PC-3 (cell line): ENCODE measurements at regions of chr17 and their contacts with region 1.

Region 1: DNA sequence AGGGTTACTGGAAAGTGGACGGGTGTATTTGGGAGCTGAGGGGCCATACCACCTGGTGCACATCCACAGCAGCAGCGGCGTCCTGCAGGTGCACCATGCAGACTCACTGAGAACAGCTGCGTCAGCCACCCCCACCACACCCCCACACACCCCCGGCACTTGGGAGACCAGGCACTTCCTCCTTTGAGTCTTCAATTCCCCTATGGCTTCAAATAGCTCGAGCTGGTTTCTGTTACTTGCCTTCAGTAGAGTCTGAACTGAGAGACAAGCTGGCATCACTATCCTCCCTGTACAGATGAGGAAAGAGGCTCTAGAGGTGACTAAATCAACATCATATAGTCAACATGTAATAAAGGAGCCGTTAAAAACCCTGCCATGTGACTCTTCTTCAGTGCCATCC is 15.4 kb downstream of the CUEDC1 start:
- DNase-seq: no peak
- ATAC-seq: no peak
- H3K4me3 ChIP-seq: no peak overlapping the region
- H3K27ac ChIP-seq: peak overlapping the region; percentile 52
- H3K4me1 ChIP-seq: peaks cover 69% of the 10 kb centered on the region
- H3K27me3 ChIP-seq: no peaks in the 10 kb centered on the region
- CTCF ChIP-seq: no peak

Region 2: DNA sequence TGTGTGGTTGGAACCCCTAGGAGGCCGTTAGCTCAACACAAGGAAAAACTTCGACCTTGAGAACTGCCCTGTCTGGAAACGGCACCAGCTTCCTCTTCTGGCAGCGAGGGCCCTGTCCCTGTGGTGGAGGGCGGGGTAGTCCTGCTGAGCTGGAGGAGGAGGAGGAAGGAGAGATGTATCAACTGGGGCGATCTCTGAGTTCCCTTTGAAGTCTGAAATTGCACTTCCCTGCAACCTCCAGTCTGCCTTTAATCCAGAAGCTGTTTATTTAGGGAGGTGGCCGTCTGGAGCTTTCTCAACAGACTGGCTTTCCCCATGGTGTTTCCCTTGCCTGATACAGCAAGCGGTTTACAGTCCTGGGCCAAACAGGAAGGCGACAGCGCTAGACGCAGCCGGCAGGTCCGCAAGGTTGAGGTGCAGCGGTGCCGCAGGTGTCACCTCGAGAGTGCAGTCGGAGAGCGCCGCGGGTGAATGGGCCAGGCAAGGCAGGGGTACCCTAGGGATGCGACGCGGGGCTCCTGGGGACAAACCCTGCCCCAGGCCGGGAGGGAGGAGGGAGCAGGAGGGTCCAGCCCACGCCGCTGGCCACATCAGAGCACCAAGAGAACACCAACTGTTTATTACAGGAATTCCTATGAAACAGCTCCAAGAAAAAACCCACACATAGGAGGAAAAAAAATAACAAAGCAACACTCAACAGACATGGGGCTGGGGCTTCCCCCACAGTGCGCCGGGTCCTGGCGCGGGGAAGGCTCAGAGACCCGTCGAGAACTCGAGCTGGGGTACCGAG is 78.6 kb before region 1 on chr17:
- CTCF ChIA-PET with region 1: no interaction called
- POLR2A ChIA-PET with region 1: interaction called, 25 read pairs
- intact Hi-C with region 1: no loop called
- DNase-seq: peak; percentile 50
- ATAC-seq: peak; percentile 30
- H3K4me3 ChIP-seq: peak overlapping the region; percentile 63
- H3K27ac ChIP-seq: peak overlapping the region; percentile 8
- H3K4me1 ChIP-seq: peaks cover 27% of the 10 kb centered on the region
- H3K27me3 ChIP-seq: no peaks in the 10 kb centered on the region
- CTCF ChIP-seq: no peak

Region 3: GRCh38 chr17:57902800-57903759 is 36.7 kb before region 1 on chr17:
- CTCF ChIA-PET with region 1: interaction called, 14 read pairs
- POLR2A ChIA-PET with region 1: interaction called, 8 read pairs
- intact Hi-C with region 1: loop called (anchors 1 kb)
- DNase-seq: peak; percentile 98
- ATAC-seq: peak; percentile 82
- H3K4me3 ChIP-seq: no peak overlapping the region
- H3K27ac ChIP-seq: peak overlapping the region; percentile 96
- H3K4me1 ChIP-seq: peaks cover 64% of the 10 kb centered on the region
- H3K27me3 ChIP-seq: no peaks in the 10 kb centered on the region
- CTCF ChIP-seq: no peak

Region 4: DNA sequence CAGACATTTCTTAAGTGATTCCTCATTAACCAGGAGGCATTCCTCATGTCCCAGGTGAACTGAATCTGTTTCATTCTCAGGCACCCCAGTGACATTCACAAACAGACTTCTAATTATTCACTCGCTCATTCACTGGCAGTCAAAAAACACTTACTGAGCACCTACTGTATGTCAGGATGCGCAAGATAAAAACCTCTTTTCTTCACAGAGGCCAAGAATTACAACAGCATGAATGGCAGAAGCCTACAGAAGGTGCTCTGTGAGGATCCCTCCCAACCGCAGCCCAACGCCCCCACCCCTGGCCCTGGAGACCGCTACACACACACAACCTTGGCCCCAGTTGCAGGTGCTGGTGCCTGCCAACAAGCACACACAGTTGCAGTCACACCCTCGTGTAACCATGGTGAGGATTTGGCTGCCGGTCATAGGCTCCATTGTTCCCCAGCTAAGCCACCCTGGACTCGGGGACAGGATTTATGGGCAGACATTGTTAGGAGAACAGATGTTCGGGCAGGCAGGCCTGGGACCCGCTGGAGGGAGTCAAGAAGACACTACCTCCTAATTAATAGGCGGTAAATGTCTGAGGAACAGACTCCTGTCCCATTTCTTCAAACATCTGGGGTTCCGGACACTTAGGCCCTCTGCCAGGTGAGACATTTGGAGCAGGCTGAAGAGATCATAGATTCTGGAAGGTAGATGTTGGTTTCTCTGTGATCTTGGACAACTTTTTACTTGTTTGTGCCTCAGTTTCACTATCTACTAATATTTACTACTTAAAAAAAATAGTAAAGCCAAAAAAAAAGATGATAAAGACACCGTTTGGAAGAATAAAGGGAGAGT is 27.7 kb before region 1 on chr17:
- CTCF ChIA-PET with region 1: interaction called, 4 read pairs
- POLR2A ChIA-PET with region 1: no interaction called
- intact Hi-C with region 1: loop called (anchors 1 kb)
- DNase-seq: peak; percentile 95
- ATAC-seq: peak; percentile 97
- H3K4me3 ChIP-seq: no peak overlapping the region
- H3K27ac ChIP-seq: peak overlapping the region; percentile 62
- H3K4me1 ChIP-seq: peaks cover 20% of the 10 kb centered on the region
- H3K27me3 ChIP-seq: no peaks in the 10 kb centered on the region
- CTCF ChIP-seq: no peak

Region 5: GRCh38 chr17:57916925-57917858 is 22.6 kb before region 1 on chr17:
- CTCF ChIA-PET with region 1: interaction called, 4 read pairs
- POLR2A ChIA-PET with region 1: interaction called, 5 read pairs
- intact Hi-C with region 1: loop called (anchors 1 kb)
- DNase-seq: peak; percentile 39
- ATAC-seq: peak; percentile 7; the same call in 1 of the 2 replicates
- H3K4me3 ChIP-seq: no peak overlapping the region
- H3K27ac ChIP-seq: peak overlapping the region; percentile 86
- H3K4me1 ChIP-seq: peaks cover 52% of the 10 kb centered on the region
- H3K27me3 ChIP-seq: no peaks in the 10 kb centered on the region
- CTCF ChIP-seq: peak; percentile 55; the same call in 1 of the 2 replicates

Region 6: DNA sequence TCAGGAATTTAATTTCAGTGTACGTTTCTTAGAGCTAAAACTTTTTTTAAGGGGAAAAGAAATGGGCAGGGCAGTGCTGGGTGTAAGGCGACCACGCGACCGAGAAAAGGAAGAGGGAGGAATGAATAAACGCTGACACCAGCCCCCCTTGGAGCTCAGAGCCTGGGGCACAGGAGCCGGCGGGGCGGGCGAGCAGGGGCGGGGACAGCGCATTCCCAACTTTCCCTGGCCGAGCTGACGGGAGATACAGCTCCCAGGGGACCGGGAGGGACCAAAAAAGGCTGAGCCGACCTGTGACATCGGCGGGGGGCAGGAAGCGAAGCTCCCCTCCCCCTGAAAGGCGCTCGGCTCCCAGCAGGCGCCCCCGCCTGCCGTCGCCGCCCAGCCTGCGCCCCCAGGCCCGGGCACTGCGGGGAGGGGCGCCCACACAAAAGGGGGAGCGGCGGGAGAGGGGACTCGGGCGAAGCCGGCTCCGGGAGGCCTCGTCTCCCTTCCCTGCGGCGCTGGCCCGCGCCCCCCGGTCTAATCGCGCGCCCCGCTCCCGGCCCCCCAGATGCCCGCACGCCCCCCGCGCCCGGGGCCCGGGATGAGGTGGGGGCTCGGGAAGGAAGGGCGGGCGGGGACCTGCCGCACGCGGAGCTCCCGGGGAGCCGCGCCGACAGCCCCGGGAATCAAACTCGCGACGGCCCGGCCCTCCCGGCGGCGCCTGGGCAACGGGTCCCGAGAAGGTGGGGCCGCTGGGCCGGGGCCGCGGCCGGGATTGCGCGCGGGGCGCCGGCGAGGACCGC is 14.8 kb after region 1 on chr17:
- CTCF ChIA-PET with region 1: interaction called, 6 read pairs
- POLR2A ChIA-PET with region 1: interaction called, 11 read pairs
- intact Hi-C with region 1: no loop called
- DNase-seq: peak; percentile 76
- ATAC-seq: peak; percentile 70
- H3K4me3 ChIP-seq: peak overlapping the region; percentile 80
- H3K27ac ChIP-seq: peak overlapping the region; percentile 73
- H3K4me1 ChIP-seq: peaks cover 54% of the 10 kb centered on the region
- H3K27me3 ChIP-seq: no peaks in the 10 kb centered on the region
- CTCF ChIP-seq: no peak